ENCODE measurements at regions of chr14 and their contacts with region 1.

Region 1: GRCh38 chr14:91060351-91061055 is at the start of gene RPS6KA5:
- DNase-seq: peak; percentile 100
- H3K4me3 Mint-ChIP-seq: peak within 1 kb of the TSS; percentile 82
- H3K27ac Mint-ChIP-seq: peak within 1 kb of the TSS; percentile 26
- H3K4me1 Mint-ChIP-seq: peaks cover 44% of the 10 kb centered on the region
- H3K27me3 Mint-ChIP-seq: no peaks in the 10 kb centered on the region
- total RNA-seq, gene RPS6KA5: 10.0 to 12.0 TPM

Region 2: GRCh38 chr14:90383075-90383730 is 677.3 kb before region 1 on chr14:
- CTCF ChIA-PET with region 1: no interaction called
- intact Hi-C with region 1: loop called (anchors 5 kb)
- DNase-seq: peak; percentile 99
- H3K4me3 Mint-ChIP-seq: no peak overlapping the region
- H3K27ac Mint-ChIP-seq: no peak overlapping the region
- H3K4me1 Mint-ChIP-seq: peaks cover 23% of the 10 kb centered on the region
- H3K27me3 Mint-ChIP-seq: no peaks in the 10 kb centered on the region

Region 3: GRCh38 chr14:90903101-90903500 is 157.4 kb before region 1 on chr14:
- CTCF ChIA-PET with region 1: interaction called, 7 read pairs
- intact Hi-C with region 1: loop called (anchors 1 kb)
- DNase-seq: peak; percentile 81
- H3K4me3 Mint-ChIP-seq: no peak overlapping the region
- H3K27ac Mint-ChIP-seq: no peak overlapping the region
- H3K4me1 Mint-ChIP-seq: peaks cover 25% of the 10 kb centered on the region
- H3K27me3 Mint-ChIP-seq: no peaks in the 10 kb centered on the region

Region 4: DNA sequence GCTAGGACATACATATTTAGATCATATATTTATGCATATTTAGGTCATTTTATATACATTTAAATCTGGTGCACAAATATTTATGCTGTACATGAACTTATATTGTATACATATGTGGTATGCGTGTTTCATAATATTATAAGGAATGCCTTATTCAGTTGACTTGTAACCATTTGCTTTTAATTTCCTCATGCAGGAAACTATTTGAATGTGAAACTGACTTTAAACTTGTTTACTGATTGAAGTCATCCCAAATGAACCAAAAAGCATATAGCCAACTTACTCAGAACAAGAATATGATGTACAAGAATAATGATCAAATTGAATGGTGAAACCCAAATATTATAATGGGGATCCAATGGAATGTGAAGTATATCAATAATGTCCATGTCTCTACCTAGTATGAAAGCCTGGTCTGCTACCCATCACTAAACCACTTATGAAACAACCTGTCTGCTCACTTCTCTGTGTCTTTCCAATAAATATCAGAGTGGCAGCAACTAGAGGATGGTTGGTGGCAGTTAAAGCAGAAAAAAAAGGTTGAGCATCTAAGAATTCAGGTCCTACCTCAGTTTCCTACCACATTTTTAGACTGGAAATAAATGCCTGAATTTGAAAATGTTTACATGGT is 38.4 kb before region 1 on chr14:
- CTCF ChIA-PET with region 1: interaction called, 3 read pairs
- intact Hi-C with region 1: loop called (anchors 1 kb)
- DNase-seq: no peak
- H3K4me3 Mint-ChIP-seq: peak overlapping the region; percentile 48
- H3K27ac Mint-ChIP-seq: peak overlapping the region; percentile 80
- H3K4me1 Mint-ChIP-seq: peaks cover 43% of the 10 kb centered on the region
- H3K27me3 Mint-ChIP-seq: no peaks in the 10 kb centered on the region

Region 5: GRCh38 chr14:91114079-91115065 is 53.9 kb after region 1 on chr14:
- CTCF ChIA-PET with region 1: interaction called, 17 read pairs
- intact Hi-C with region 1: loop called (anchors 1 kb)
- DNase-seq: peak; percentile 82
- H3K4me3 Mint-ChIP-seq: peak overlapping the region; percentile 94
- H3K27ac Mint-ChIP-seq: peak overlapping the region; percentile 95
- H3K4me1 Mint-ChIP-seq: peaks cover 60% of the 10 kb centered on the region
- H3K27me3 Mint-ChIP-seq: no peaks in the 10 kb centered on the region

Region 6: GRCh38 chr14:91228112-91229004 is 167.9 kb after region 1 on chr14:
- CTCF ChIA-PET with region 1: no interaction called
- intact Hi-C with region 1: loop called (anchors 1 kb)
- DNase-seq: peak; percentile 97
- H3K4me3 Mint-ChIP-seq: peak overlapping the region; percentile 58
- H3K27ac Mint-ChIP-seq: peak overlapping the region; percentile 99
- H3K4me1 Mint-ChIP-seq: peaks cover 89% of the 10 kb centered on the region
- H3K27me3 Mint-ChIP-seq: no peaks in the 10 kb centered on the region

Region 7: GRCh38 chr14:91317381-91318308 is 257.1 kb after region 1 on chr14:
- CTCF ChIA-PET with region 1: no interaction called
- intact Hi-C with region 1: loop called (anchors 1 kb)
- DNase-seq: peak; percentile 87
- H3K4me3 Mint-ChIP-seq: peak overlapping the region; percentile 60
- H3K27ac Mint-ChIP-seq: peak overlapping the region; percentile 95
- H3K4me1 Mint-ChIP-seq: peaks cover 72% of the 10 kb centered on the region
- H3K27me3 Mint-ChIP-seq: no peaks in the 10 kb centered on the region

Measured in activated naive CD4-positive, alpha-beta T cell treated with anti-CD3 and anti-CD28 coated beads for 36 hours (primary cell).